Activated CD4-positive, alpha-beta T cell treated with anti-CD3 and anti-CD28 coated beads for 36 hours (primary cell): ENCODE measurements at regions of chr3 and their contacts with region 1.

Region 1: DNA sequence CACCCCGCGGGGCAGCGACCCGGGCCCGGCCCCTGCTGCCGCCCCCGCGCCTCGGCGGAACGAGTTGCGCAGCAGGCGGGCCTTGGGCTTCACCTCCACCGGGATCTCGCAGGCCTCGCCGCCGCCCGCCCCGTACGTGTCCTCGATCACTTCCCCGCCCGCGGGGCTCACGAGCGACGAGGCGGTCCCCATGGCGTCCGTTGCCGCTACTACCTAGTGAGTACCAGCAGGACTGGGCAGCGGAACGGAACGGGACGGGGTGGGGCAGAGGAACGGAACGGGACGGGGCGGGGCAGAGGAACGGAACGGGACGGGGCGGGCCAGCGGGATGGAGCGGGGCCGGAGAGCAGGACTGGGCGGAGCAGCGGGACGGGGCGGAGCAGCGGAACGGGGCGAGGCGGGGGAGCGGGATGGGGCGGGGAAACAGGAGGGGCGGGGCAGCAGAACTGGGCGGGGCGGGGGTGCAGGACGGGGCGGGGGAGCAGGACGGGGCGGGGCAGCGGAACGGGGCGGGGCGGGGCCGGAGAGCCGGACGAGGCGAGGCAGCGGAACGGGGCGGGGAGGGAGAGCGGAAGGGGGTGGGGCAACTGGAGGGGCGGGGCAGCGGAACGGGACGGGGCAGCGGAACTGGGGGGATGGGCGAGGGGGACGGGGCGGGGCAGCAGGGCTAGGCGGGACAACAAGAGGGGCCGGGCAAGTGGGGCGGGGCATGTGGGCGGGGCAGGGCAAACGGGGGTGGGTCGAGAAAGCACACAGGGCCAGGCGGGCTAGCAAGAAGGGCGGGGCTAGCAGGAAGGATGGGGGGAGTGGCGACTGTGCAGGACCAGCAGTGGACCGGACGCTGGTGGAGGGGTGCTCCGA is at the start of gene NPHP3:
- DNase-seq: peak; percentile 100
- ATAC-seq: peak; percentile 86
- H3K4me3 Mint-ChIP-seq: peak within 1 kb of the TSS; percentile 90
- H3K27ac Mint-ChIP-seq: peak within 1 kb of the TSS; percentile 84
- H3K4me1 Mint-ChIP-seq: peaks cover 40% of the 10 kb centered on the region
- H3K27me3 Mint-ChIP-seq: no peaks in the 10 kb centered on the region
- total RNA-seq, gene NPHP3: 11.8 to 11.9 TPM

Region 2: DNA sequence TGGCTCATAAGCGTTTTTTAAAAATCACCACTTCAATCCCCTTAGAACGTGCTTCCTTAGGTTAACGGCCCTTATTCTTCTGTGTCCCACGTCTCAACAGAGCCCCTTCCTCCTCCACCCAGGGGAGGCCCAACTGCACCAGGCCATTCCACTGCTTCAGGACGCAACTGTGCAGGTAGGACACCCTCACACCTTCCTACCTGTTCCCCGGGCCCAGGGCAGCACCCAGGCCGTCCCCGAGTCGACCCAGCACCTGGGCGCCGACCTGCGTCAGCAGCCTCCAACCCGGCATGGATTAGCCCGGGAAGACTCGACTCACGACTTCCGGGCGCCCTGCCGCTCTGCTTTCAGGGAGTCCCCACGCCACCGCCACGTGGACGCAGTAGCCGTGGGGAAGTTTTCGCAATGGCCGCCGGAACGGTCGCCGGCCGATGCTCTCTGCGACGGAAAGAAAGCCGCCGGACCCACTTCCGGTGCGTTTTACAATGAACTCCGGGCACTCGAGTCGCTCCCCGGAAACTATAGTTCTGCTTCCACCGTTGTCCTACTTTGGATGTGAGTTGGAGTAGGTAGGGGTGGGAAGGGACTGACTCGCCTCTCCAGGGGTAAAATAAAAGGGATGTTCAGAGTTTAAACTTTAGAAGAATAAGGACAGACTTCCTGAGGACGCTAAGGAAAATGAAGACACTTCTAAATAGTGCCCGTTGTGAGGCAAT is 1219.7 kb before region 1 on chr3 and contains the start of gene MRPL3:
- CTCF ChIA-PET with region 1: no interaction called
- POLR2A ChIA-PET with region 1: no interaction called
- intact Hi-C with region 1: loop called in 1 of 2 experiments (anchors 5 kb)
- DNase-seq: peak; percentile 92
- ATAC-seq: peak; percentile 97
- H3K4me3 Mint-ChIP-seq: peak within 1 kb of the TSS; percentile 98
- H3K27ac Mint-ChIP-seq: peak within 1 kb of the TSS; percentile 93
- H3K4me1 Mint-ChIP-seq: peaks cover 33% of the 10 kb centered on the region
- H3K27me3 Mint-ChIP-seq: no peaks in the 10 kb centered on the region
- total RNA-seq, gene MRPL3: 166 to 278 TPM

Region 3: DNA sequence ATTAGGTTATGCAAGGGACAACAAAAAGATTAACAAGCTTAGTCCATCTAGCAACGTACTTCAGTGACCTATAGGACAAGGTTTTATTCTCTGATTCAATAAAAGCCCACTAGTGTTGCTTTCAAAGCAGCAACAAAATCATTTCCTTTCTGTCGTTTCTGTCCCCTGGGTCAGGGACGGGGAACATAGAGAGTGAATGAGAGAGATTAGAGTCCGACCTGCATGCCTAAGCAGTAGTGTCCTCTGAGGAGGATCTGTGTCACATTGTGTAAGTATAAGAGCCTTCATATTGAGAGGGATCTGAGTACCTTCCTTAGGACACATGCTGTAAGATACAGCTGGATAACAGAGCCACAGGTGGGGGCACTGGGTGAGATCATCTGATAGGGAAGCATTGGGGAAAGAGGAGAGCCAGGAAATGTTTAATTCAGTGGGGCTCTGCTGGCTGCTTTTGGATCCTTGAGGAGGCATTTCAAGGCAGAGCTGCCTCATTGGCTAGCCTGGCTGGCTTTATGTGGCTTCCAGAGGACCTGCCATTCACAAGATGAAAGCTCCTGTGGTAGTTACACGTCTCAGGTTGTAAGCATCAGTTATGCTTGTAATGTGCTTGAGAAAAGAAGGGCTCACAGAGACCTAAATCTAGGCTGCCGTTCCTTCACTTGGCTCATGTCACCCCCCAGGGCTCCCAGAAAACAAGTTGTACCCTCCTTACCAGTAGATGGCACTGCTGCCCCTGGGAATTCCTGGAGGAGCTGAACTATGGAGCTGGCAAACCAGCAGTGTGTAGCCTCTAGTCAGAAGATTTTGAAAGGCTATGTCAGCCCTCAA is 318.5 kb after region 1 on chr3:
- CTCF ChIA-PET with region 1: no interaction called
- POLR2A ChIA-PET with region 1: no interaction called
- intact Hi-C with region 1: loop called in 1 of 2 experiments (anchors 5 kb)
- DNase-seq: peak; percentile 67
- ATAC-seq: peak; percentile 55
- H3K4me3 Mint-ChIP-seq: no peak overlapping the region
- H3K27ac Mint-ChIP-seq: no peak overlapping the region
- H3K4me1 Mint-ChIP-seq: no peaks in the 10 kb centered on the region
- H3K27me3 Mint-ChIP-seq: peaks cover 41% of the 10 kb centered on the region

Region 4: DNA sequence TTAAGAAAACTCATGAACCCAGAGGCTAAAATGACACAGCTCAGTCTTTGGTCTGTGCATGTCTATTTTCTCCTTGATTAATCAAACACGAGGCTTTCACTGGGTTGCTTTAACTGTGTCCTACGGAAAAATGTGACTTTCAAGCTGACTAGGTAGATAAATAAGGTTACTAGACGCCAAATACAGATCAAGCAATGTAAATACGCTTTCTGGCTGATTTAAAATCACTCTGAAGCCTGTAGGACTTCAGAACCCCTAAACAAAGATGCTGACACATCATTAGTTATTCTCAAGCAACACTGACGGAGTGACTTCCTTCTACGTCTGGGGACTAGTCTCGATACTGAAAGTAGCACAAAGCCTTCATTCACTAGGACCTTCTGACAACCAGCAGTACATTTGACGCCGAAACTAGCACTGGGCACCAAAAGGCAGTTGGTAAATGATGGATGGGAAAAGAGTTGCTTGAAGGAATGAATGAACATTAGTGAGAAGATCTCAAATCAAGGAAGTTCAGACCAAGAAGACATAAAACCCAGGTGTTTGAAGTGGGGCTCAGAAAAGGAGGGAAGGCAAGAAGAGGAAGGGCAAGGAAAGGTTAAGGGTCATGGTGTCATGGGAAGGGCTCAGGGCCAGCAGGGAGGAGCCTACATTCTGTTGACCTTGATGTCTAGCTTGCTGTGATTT is 784.0 kb after region 1 on chr3:
- CTCF ChIA-PET with region 1: interaction called, 3 read pairs
- POLR2A ChIA-PET with region 1: no interaction called
- intact Hi-C with region 1: loop called in 1 of 2 experiments (anchors 2 kb)
- DNase-seq: peak; percentile 42
- ATAC-seq: peak; percentile 99
- H3K4me3 Mint-ChIP-seq: peak overlapping the region; percentile 48
- H3K27ac Mint-ChIP-seq: peak overlapping the region; percentile 87
- H3K4me1 Mint-ChIP-seq: peaks cover 13% of the 10 kb centered on the region
- H3K27me3 Mint-ChIP-seq: no peaks in the 10 kb centered on the region

Region 5: DNA sequence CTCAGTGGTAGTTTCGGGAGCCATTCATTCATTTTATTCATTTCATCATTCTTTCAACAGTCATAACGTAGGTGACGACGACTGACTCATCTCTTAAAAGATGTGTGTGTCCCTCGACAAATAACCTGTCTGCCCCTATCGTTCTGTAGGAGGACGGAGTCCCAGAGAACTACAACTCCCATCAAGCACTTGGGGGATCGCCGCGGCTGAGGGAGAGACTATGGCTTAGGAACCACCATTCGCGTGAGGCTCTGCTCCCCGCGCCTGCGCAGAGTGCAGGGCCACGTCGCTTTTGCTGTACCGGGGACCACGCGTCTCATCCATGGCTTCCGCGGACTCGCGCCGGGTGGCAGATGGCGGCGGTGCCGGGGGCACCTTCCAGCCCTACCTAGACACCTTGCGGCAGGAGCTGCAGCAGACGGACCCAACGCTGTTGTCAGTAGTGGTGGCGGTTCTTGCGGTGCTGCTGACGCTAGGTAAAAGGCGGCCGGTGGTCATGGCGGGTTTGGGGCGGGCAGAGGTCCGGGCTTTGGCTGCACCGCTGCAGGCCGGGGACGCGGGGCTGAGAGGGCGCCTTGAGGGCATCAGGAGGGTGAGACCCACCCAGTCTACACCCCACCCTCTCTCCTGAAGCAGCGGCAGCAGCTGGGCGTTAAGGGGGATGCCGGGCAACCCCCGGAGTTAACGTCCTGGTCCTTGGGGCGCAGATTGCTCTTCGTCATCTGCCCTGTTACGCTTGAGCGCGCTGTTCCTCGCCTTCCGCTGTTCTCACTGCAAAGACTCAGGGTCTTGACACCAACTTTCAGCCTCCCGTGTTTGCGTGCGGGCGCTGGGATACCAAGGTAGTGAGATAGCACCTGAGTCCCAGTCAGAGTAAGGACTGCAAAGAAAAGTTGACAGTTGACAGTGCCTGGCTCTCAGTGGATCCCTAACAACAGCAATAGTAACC is 1083.4 kb after region 1 on chr3 and contains the start of gene SRPRB:
- CTCF ChIA-PET with region 1: no interaction called
- POLR2A ChIA-PET with region 1: no interaction called
- intact Hi-C with region 1: loop called (anchors 1 to 5 kb)
- DNase-seq: peak; percentile 98
- ATAC-seq: peak; percentile 99
- H3K4me3 Mint-ChIP-seq: peak within 1 kb of the TSS; percentile 93
- H3K27ac Mint-ChIP-seq: peak within 1 kb of the TSS; percentile 98
- H3K4me1 Mint-ChIP-seq: peaks cover 39% of the 10 kb centered on the region
- H3K27me3 Mint-ChIP-seq: peaks cover 6% of the 10 kb centered on the region
- total RNA-seq, gene SRPRB: 42.7 to 66.2 TPM

Region 6: DNA sequence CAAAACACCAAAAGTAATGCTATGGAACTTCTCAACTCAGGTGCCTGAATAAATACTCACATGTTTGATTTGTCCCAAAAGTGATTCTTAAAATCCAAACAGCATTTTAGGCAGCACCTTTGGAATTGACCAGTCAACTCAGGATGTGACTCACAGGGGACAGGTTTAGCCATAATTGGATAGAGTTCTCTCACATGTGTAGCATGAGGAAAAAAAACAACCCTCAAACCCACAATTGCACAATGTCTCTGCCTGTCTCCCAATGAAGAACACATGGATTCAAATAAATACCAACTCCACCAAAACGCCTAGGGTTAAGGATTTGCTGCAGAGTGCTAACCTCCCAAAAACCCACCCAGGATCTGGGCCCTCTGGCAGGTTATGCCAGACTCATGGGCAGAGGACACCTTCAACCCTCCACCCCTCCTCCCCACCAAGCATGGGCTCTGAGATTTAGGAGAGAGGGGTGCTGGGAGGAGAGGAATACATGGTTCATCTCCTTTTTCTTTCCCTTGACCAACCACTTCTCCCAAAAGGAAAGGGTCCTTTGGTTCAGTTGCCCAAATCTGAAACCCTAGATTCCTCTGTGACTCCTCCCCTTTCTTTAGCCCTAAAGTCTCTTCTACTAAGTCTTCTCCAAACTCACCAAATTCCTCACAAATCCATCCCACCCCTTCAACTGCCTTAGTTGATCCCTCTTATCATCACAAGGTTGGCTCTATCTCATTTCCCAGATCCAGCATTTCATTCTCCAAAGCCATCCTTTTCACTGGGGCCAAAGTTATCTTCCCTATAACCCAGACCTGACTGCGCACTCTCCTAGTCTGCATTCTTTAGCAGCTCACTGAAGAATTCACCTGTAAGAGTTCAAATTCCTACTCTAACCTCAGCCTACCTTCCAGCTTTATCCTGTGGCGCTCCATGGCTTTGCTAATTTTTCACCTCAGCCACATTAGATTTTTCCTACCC is 1520.5 kb after region 1 on chr3:
- CTCF ChIA-PET with region 1: no interaction called
- POLR2A ChIA-PET with region 1: no interaction called
- intact Hi-C with region 1: loop called in 1 of 2 experiments (anchors 10 kb)
- DNase-seq: peak; percentile 20
- ATAC-seq: peak; percentile 51
- H3K4me3 Mint-ChIP-seq: no peak overlapping the region
- H3K27ac Mint-ChIP-seq: no peak overlapping the region
- H3K4me1 Mint-ChIP-seq: peaks cover 88% of the 10 kb centered on the region
- H3K27me3 Mint-ChIP-seq: no peaks in the 10 kb centered on the region